ENCODE measurements at regions of chr1 and their contacts with region 1.

Region 1: DNA sequence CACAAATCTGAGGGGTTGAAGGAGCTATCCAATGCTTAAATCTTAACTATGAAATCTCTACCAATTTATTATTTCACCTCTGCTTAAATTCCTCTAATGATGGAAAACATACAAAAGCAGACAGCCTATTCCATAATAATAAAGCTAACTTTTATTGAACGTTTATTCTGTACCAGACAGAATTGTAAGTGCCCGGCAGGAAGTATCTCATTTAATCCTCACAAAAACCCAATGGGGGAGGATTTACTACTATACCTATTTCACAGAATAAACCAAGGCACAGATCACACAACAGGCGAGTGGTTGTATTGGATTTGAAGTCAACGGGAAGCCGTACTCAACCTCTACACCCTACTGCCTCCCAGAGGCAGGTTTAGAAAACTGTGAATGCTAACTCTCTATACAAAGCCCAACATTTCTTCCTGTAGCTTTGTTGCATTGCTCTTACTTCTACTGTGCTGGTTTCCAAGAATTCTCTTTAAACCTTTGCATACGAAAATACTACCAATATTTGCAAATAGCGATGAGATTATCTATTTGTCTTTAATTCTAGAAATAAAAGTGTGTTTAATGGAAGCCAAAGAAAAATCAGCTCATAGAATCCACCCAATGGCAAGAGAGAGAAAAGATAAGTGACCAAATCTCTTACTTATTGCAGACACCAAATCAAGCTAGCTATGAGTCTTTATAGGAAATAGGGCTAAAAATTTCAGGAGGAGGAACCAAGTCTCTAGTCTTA is 33.5 kb upstream of the C1orf53 start:
- DNase-seq: peak in 11 of 14 experiments; percentile 2 to 76 (median 25)
- ATAC-seq: peak; percentile 89
- H3K4me3 ChIP-seq: no peak overlapping the region
- H3K4me3 Mint-ChIP-seq: no peak overlapping the region
- H3K27ac ChIP-seq: no peak overlapping the region
- H3K27ac Mint-ChIP-seq: no peak overlapping the region
- H3K4me1 ChIP-seq: no peaks in the 10 kb centered on the region
- H3K4me1 Mint-ChIP-seq: no peaks in the 10 kb centered on the region
- H3K27me3 ChIP-seq: no peaks in the 10 kb centered on the region
- H3K27me3 Mint-ChIP-seq: peaks cover 4% of the 10 kb centered on the region
- CTCF ChIP-seq: peak; percentile 67

Region 2: GRCh38 chr1:197521118-197521739 is 347.7 kb before region 1 on chr1:
- CTCF ChIA-PET with region 1: interaction called, 6 read pairs
- POLR2A ChIA-PET with region 1: interaction called, 3 read pairs
- intact Hi-C with region 1: loop called (anchors 1 to 2 kb)
- DNase-seq: peak in 4 of 14 experiments; percentile 5 to 57 (median 50)
- ATAC-seq: peak; percentile 52
- H3K4me3 ChIP-seq: no peak overlapping the region
- H3K4me3 Mint-ChIP-seq: no peak overlapping the region
- H3K27ac ChIP-seq: no peak overlapping the region
- H3K27ac Mint-ChIP-seq: no peak overlapping the region
- H3K4me1 ChIP-seq: no peaks in the 10 kb centered on the region
- H3K4me1 Mint-ChIP-seq: no peaks in the 10 kb centered on the region
- H3K27me3 ChIP-seq: no peaks in the 10 kb centered on the region
- H3K27me3 Mint-ChIP-seq: no peaks in the 10 kb centered on the region
- CTCF ChIP-seq: peak; percentile 85

Region 3: DNA sequence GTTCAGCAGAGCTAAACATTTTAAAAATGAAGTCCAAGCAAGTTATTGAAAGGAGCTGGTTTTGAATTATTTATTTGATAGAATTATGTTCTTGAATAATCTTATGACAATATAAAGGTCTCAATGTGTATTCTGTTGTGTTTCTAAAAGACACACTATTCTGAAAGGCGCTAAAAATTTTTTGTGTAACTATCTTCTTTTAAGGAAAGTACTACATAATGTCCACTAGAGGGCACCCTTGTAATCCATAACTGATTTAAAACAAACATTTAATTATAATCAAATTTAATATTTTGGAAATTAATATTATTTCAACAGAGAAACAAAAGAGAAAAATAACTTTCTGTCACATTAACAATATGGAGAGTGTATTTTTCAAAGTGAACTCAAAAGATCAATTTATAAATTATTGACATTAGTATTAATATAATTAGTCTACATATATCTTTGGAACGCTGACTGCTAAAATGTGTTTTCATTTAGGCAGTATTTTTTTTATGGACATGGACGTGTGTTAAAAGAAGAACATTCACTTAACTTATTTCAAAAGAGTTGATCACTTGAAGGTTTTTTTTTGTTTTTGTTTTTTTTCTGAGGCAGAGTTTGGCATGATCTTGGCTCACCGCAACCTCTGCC is 342.1 kb before region 1 on chr1:
- CTCF ChIA-PET with region 1: interaction called, 6 read pairs
- POLR2A ChIA-PET with region 1: interaction called, 3 read pairs
- intact Hi-C with region 1: loop called (anchors 1 to 2 kb)
- DNase-seq: peak in 3 of 14 experiments; percentile 40 to 59 (median 52)
- ATAC-seq: peak; percentile 43
- H3K4me3 ChIP-seq: no peak overlapping the region
- H3K4me3 Mint-ChIP-seq: no peak overlapping the region
- H3K27ac ChIP-seq: no peak overlapping the region
- H3K27ac Mint-ChIP-seq: no peak overlapping the region
- H3K4me1 ChIP-seq: no peaks in the 10 kb centered on the region
- H3K4me1 Mint-ChIP-seq: no peaks in the 10 kb centered on the region
- H3K27me3 ChIP-seq: no peaks in the 10 kb centered on the region
- H3K27me3 Mint-ChIP-seq: no peaks in the 10 kb centered on the region
- CTCF ChIP-seq: peak; percentile 87

Region 4: GRCh38 chr1:197614916-197615692 is 253.8 kb before region 1 on chr1:
- CTCF ChIA-PET with region 1: interaction called, 22 read pairs
- POLR2A ChIA-PET with region 1: interaction called, 3 read pairs
- intact Hi-C with region 1: loop called (anchors 1 kb)
- DNase-seq: peak in 10 of 14 experiments; percentile 1 to 50 (median 6)
- ATAC-seq: peak; percentile 43
- H3K4me3 ChIP-seq: no peak overlapping the region
- H3K4me3 Mint-ChIP-seq: no peak overlapping the region
- H3K27ac ChIP-seq: no peak overlapping the region
- H3K27ac Mint-ChIP-seq: no peak overlapping the region
- H3K4me1 ChIP-seq: no peaks in the 10 kb centered on the region
- H3K4me1 Mint-ChIP-seq: peaks cover 5% of the 10 kb centered on the region
- H3K27me3 ChIP-seq: no peaks in the 10 kb centered on the region
- H3K27me3 Mint-ChIP-seq: no peaks in the 10 kb centered on the region
- CTCF ChIP-seq: peak; percentile 58

Region 5: DNA sequence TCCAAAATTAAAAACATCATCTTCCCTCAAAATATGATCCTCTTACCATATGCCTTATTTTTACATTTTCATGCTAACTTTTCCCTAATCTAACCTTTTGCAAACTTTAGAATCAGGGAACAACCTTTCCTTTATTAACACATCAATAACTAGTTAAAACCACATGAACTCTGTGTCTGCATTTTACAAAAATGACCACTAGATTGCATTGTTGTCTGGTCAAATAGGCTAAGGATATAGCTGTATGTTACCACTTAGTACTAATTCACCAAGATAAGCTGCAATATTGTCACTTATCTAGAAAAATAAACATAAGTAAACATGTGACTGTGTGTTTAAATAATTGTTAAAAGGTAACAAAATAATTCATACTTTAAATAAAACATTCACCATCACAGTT is 176.0 kb before region 1 on chr1:
- CTCF ChIA-PET with region 1: no interaction called
- POLR2A ChIA-PET with region 1: no interaction called
- intact Hi-C with region 1: loop called in 1 of 2 experiments (anchors 10 kb)
- DNase-seq: peak in 1 of 14 experiments; percentile 10
- ATAC-seq: no peak
- H3K4me3 ChIP-seq: no peak overlapping the region
- H3K4me3 Mint-ChIP-seq: no peak overlapping the region
- H3K27ac ChIP-seq: no peak overlapping the region
- H3K27ac Mint-ChIP-seq: no peak overlapping the region
- H3K4me1 ChIP-seq: no peaks in the 10 kb centered on the region
- H3K4me1 Mint-ChIP-seq: peaks cover 52% of the 10 kb centered on the region
- H3K27me3 ChIP-seq: no peaks in the 10 kb centered on the region
- H3K27me3 Mint-ChIP-seq: no peaks in the 10 kb centered on the region
- CTCF ChIP-seq: no peak

Region 6: GRCh38 chr1:198007687-198008607 is 139.0 kb after region 1 on chr1:
- CTCF ChIA-PET with region 1: no interaction called
- POLR2A ChIA-PET with region 1: no interaction called
- intact Hi-C with region 1: no loop called
- DNase-seq: no peak
- ATAC-seq: no peak
- H3K4me3 ChIP-seq: no peak overlapping the region
- H3K4me3 Mint-ChIP-seq: no peak overlapping the region
- H3K27ac ChIP-seq: no peak overlapping the region
- H3K27ac Mint-ChIP-seq: no peak overlapping the region
- H3K4me1 ChIP-seq: no peaks in the 10 kb centered on the region
- H3K4me1 Mint-ChIP-seq: no peaks in the 10 kb centered on the region
- H3K27me3 ChIP-seq: no peaks in the 10 kb centered on the region
- H3K27me3 Mint-ChIP-seq: no peaks in the 10 kb centered on the region
- CTCF ChIP-seq: no peak

Region 7: DNA sequence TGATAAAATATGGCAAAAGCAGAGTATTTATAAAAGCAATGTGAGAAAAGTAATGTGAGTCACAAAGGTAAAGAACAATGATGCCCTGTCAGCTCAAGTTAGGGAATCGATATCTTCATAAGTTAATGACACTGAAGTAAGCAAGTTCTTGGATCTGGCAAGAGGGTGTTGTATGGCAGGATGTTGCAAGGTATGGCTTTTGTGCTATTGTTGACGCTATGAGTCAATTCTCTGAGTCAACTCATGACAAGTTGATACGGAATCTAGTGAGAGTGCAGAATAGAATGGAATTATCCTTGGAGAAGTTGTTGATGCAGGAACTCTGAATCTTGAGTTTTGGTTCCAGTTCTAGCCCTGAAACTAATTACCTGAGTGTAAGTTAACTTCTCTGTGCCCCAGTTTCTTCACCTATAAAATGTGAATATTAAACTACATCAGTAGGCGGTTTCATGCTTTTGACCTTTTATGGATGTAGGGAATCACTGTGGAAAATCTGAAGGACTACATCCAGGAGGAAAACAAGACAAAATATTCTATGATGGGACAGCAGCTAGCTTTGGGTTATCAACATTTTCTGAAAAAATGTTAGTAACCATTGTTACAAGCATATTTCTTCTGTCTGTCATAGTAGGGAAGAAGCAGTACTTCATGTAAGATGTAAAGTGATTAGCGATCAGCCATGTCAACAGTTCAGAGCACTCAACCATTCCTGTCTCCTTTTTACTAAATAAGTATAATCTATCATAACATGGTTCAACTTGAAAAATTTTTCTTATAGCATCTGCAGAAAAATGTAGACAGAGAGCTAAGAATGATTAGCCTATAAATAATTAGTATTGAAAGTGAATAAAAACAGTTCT is 574.7 kb after region 1 on chr1:
- CTCF ChIA-PET with region 1: no interaction called
- POLR2A ChIA-PET with region 1: no interaction called
- intact Hi-C with region 1: no loop called
- DNase-seq: no peak
- ATAC-seq: no peak
- H3K4me3 ChIP-seq: no peak overlapping the region
- H3K4me3 Mint-ChIP-seq: no peak overlapping the region
- H3K27ac ChIP-seq: no peak overlapping the region
- H3K27ac Mint-ChIP-seq: no peak overlapping the region
- H3K4me1 ChIP-seq: no peaks in the 10 kb centered on the region
- H3K4me1 Mint-ChIP-seq: no peaks in the 10 kb centered on the region
- H3K27me3 ChIP-seq: no peaks in the 10 kb centered on the region
- H3K27me3 Mint-ChIP-seq: no peaks in the 10 kb centered on the region
- CTCF ChIP-seq: no peak

Measured in CD4-positive, alpha-beta T cell (primary cell).